Heart right ventricle (tissue), 16 donors: ENCODE measurements at regions of chr7 and their contacts with region 1.

Region 1: GRCh38 chr7:106153891-106154449 is 41.9 kb upstream of the SYPL1 start:
- DNase-seq: peak; percentile 82 to 85
- ATAC-seq: peak; percentile 92 to 99 (median 96)
- H3K4me3 ChIP-seq: peak overlapping the region in 2 of 10 donors; percentile 2 to 23
- H3K27ac ChIP-seq: no peak overlapping the region
- H3K4me1 ChIP-seq: peaks cover 0 to 17% (median 10%) of the 10 kb centered on the region in 9 donors
- H3K27me3 ChIP-seq: peaks cover 0 to 51% (median 0%) of the 10 kb centered on the region in 7 donors
- CTCF ChIP-seq: peak; percentile 91 to 98 (median 96)

Region 2: DNA sequence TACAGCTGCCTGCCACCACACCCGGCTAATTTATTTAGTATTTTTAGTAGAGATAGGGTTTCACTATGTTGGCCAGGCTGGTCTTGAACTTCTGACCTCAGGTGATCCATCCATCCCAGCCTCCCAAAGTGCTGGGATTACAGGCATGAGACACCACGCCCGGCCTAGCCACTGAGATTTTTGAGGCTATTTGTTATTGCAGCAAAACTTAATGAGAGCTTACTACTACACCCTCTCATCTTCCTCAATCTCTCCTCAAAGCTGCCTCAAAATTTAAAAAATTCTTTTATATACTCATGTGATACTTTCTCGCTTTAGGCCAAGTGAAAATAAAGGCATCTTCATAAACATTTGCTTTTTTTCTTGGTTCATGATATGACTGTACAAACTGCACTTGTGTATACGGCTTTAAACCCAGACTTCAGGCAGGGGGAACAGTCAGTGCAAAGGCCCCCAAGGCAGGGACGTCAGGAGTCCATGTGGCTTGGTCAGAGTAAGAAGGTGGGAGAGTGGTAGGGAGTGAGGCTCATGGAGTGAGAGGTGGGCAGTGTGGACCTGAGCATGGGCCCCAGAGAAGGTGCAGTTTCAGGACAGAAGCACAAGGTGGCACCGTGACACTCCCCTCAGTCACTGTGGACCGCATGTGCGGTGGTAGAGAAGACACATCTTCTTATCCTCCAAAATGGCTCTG is 97.3 kb before region 1 on chr7:
- intact Hi-C with region 1: loop called (anchors 1 to 2 kb)
- DNase-seq: peak; percentile 65 to 76
- ATAC-seq: peak; percentile 84 to 96 (median 91)
- H3K4me3 ChIP-seq: no peak overlapping the region
- H3K27ac ChIP-seq: no peak overlapping the region
- H3K4me1 ChIP-seq: peaks cover 0 to 22% (median 8%) of the 10 kb centered on the region in 9 donors
- H3K27me3 ChIP-seq: no peaks in the 10 kb centered on the region
- CTCF ChIP-seq: peak; percentile 78 to 93 (median 86)

Region 3: GRCh38 chr7:106064771-106065585 is 89.0 kb before region 1 on chr7:
- intact Hi-C with region 1: loop called in 1 of 10 experiments (anchors 2 kb)
- DNase-seq: peak; percentile 80 to 91
- ATAC-seq: peak; percentile 88 to 97 (median 93)
- H3K4me3 ChIP-seq: peak overlapping the region in 8 of 10 donors; percentile 15 to 48 (median 36)
- H3K27ac ChIP-seq: peak overlapping the region; percentile 39 to 94 (median 86)
- H3K4me1 ChIP-seq: peaks cover 3 to 56% (median 39%) of the 10 kb centered on the region in 9 donors
- H3K27me3 ChIP-seq: no peaks in the 10 kb centered on the region
- CTCF ChIP-seq: peak in 4 of 9 donors; percentile 7 to 36 (median 30)

Region 4: DNA sequence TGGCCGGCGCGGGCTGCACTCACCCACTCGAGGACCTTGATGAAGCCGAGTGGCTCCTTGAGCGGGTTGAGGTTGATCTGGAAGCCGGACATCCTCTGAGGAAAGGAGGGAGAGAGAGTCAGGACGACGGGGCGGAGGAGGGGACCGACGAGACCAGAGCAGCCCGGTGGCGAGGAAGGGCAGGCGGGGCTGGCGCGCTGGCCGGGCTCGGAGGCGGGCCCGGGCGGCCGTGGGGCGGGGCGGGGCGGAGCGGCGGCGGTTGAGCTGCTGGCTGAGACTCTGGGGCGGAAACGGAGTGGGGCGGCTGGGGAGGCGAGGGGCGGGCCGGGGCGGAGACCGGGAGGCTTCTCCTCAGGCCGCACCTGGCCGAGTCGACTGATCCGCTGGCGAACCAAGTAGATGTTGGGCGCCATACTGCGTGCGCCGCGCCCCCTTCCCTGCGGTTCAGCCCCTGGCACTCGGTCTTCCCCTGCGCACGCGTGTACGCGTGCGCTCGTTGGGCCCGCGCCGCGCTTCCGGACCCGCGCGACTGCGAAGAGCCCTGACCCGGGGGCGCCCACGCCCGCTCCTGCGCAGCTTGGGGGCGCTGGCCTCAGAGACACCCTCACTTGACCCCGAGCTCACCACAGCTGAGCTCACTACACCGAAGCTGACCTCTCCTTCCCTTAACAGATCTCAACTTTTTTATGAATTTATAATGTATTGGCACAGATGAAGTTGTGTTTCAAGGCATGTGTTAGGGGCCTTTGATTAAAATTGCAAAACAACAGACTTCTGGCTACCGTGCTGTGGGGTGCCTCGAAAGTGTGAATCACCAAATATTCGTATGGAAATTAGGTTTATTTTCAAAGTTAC is 41.6 kb before region 1 on chr7 and contains the start of gene SYPL1:
- intact Hi-C with region 1: loop called in 2 of 10 experiments (anchors 5 kb)
- DNase-seq: peak; percentile 93 to 95
- ATAC-seq: peak; percentile 95 to 97 (median 96)
- H3K4me3 ChIP-seq: peak within 1 kb of the TSS; percentile 45 to 82 (median 70)
- H3K27ac ChIP-seq: peak within 1 kb of the TSS; percentile 94 to 99 (median 98)
- H3K4me1 ChIP-seq: peaks cover 4 to 46% (median 40%) of the 10 kb centered on the region in 9 donors
- H3K27me3 ChIP-seq: no peaks in the 10 kb centered on the region
- CTCF ChIP-seq: peak in 4 of 9 donors; percentile 10 to 52 (median 46)
- total RNA-seq, gene SYPL1: 63.9 to 121 (median 80.9) TPM

Region 5: GRCh38 chr7:106205621-106206222 is 51.8 kb after region 1 on chr7:
- intact Hi-C with region 1: no loop called
- DNase-seq: no peak
- ATAC-seq: no peak
- H3K4me3 ChIP-seq: no peak overlapping the region
- H3K27ac ChIP-seq: peak overlapping the region in 1 of 10 donors; percentile 59
- H3K4me1 ChIP-seq: peaks cover 0 to 26% (median 0%) of the 10 kb centered on the region in 9 donors
- H3K27me3 ChIP-seq: no peaks in the 10 kb centered on the region
- CTCF ChIP-seq: no peak